Activated CD4-positive, alpha-beta T cell treated with anti-CD3 and anti-CD28 coated beads, Interleukin-2, amount 10 ng/mL, durations not matched to agents 7 days and 5 days (primary cell): ENCODE measurements at regions of chr19 and their contacts with region 1.

Region 1: GRCh38 chr19:40465557-40466150 is at the start of gene BLVRB:
- DNase-seq: peak; percentile 99
- H3K4me3 Mint-ChIP-seq: peak within 1 kb of the TSS; percentile 85
- H3K27ac Mint-ChIP-seq: peak within 1 kb of the TSS; percentile 87
- H3K4me1 Mint-ChIP-seq: peaks cover 36% of the 10 kb centered on the region
- H3K27me3 Mint-ChIP-seq: peaks cover 19% of the 10 kb centered on the region
- total RNA-seq, gene BLVRB: 18.5 to 20.0 TPM

Region 2: DNA sequence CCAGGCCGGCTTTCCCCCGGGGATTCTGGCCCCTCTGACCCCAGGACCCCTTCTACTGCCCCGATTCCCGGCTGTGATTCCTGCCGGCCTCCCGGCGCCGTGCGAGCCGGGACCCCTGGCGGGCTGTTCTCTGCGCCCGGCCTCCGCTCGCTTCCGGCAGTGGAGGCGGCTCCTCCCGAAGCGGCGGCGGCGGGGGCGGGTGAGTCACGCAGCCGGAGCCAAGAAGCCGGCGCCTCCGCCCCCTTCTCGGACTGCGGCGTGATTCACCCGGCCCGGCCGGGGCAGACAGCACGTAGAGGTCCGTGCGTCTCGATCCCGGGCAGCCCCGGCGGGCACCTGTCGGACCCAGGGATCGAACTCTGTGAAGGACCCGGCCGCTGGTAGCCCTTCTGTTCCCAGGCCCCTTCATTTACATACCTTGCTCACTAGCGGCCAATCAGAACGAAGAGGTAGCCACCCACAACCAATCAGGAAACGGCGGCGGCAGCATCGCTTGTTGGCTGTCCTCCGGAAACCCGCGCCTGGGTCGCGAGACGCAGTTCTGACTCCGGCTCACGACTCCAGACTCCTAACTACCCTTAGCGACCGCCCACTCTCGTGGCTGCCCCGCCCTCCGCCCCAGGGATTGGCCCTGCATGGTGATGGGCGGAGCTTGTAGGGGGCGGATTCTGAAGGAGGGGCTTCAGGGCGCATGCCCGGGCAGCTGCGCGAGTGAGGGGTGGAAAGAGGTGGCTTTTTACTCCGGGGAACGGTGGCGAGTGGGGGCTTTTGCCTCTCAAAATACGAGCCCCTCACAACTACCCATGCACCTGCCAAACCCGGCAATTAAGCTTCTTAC is 40.0 kb before region 1 on chr19 and contains the start of gene SERTAD1:
- CTCF ChIA-PET with region 1: interaction called, 14 read pairs
- POLR2A ChIA-PET with region 1: no interaction called
- DNase-seq: peak; percentile 100
- H3K4me3 Mint-ChIP-seq: peak within 1 kb of the TSS; percentile 99
- H3K27ac Mint-ChIP-seq: peak within 1 kb of the TSS; percentile 98
- H3K4me1 Mint-ChIP-seq: peaks cover 33% of the 10 kb centered on the region
- H3K27me3 Mint-ChIP-seq: no peaks in the 10 kb centered on the region
- total RNA-seq, gene SERTAD1: 6.2 to 9.7 TPM

Region 3: DNA sequence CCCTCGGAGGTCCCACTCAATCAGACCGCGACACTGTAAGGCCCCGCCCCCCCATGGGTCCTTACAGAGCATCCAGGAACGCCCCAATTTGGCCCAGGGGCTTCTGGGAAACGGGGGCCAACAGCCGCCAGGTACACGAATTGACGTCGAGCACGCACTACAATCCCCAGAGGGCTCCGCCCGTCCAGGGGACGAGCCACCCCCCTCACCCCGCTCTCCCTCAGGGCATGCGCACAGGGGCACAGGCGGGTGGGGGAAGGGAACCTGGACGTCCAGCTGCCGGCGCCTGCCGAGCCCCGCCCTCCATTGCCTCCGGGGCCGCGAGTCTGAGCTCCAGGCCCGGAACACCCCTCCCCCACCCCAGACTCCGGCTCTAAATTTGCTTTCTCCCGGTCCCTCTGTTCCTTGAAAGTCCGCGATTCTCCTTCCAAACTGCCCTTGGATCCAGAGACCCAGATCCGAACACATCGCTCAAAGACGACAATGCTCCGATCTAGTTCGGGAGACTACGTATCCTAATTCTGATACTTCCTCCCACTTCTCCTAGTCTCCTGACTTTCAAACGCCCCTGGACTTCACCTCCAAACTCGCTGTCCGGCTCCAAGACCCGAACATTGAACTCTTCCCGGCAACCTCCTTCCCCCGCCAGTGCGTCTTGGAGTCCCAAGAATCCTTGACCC is 22.4 kb before region 1 on chr19:
- CTCF ChIA-PET with region 1: interaction called, 16 read pairs
- POLR2A ChIA-PET with region 1: interaction called, 3 read pairs
- DNase-seq: peak; percentile 100
- H3K4me3 Mint-ChIP-seq: peak overlapping the region; percentile 97
- H3K27ac Mint-ChIP-seq: peak overlapping the region; percentile 96
- H3K4me1 Mint-ChIP-seq: peaks cover 19% of the 10 kb centered on the region
- H3K27me3 Mint-ChIP-seq: no peaks in the 10 kb centered on the region

Region 4: DNA sequence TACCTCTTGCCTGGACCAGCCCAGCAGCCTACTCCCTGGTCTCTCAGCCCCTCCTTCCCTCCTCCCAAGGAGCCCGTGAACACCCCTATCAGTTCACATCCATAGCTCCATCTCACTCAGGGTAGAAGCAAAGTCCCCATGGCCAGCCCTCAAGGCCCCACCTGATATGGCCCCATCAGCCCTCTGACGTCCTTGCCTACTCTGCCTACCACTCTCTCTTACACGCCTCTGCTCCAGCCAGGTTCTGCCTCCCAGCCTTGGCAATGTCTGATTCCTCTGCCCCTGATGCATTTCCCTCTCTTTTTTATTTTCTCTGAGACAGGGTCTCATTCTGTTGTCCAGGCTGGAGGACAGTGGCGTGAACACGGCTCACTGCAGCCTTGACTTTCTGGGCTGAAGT is 13.6 kb before region 1 on chr19:
- CTCF ChIA-PET with region 1: interaction called, 35 read pairs
- POLR2A ChIA-PET with region 1: interaction called, 3 read pairs
- DNase-seq: no peak
- H3K4me3 Mint-ChIP-seq: no peak overlapping the region
- H3K27ac Mint-ChIP-seq: no peak overlapping the region
- H3K4me1 Mint-ChIP-seq: no peaks in the 10 kb centered on the region
- H3K27me3 Mint-ChIP-seq: no peaks in the 10 kb centered on the region

Region 5: GRCh38 chr19:40523322-40524047 is 57.8 kb after region 1 on chr19:
- CTCF ChIA-PET with region 1: no interaction called
- POLR2A ChIA-PET with region 1: no interaction called
- DNase-seq: peak; percentile 56
- H3K4me3 Mint-ChIP-seq: no peak overlapping the region
- H3K27ac Mint-ChIP-seq: no peak overlapping the region
- H3K4me1 Mint-ChIP-seq: peaks cover 4% of the 10 kb centered on the region
- H3K27me3 Mint-ChIP-seq: peaks cover 18% of the 10 kb centered on the region